A549 (cell line): ENCODE measurements at regions of chr2 and their contacts with region 1.

Region 1: DNA sequence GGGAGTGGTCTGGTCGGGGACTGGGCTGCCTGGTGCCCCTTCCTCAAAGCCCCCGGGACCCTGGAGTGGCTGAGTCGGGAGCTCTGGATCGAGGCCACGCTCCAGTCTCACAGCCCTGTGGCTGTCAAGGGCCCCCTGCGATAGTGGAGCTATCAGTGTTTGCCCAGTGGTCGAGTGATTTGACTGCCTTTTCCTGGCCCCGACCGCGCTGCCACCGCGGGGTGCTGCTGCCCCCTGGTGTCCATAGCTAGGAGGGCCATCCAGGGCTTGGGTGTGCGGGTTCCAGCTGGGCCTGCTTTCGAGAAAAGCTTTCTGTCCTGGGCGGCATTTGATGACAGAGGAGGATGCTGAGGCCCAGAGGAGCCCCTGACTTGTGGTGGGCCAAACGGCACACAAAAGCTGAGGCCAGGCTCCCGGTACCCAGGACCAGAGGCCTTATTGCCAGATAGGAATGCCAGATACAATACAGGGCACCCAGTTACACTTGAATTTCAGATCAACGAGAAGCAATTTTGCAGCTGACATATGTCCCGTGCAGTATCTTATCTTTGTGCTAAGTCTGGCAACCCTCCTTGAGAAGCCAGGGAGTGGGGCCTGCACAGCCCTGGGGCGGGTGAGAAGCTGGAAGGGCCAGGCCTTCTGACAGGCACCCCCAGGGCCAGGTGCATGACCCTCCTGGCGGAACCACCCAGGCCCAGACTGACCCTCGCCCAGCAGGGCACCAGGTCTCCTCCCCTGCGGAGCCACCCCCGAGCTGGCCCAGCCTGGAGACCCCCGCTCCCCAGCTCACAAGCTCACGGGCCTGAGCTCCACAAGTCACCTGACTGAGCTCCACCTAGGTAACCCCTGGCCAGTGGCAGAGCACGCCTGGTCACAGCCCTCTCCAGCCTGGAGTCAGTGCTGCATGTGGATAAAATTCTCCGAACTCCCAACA is 13.0 kb downstream of the ODC1 start:
- DNase-seq: peak; percentile 80 to 91
- ATAC-seq: peak; percentile 60 to 87
- H3K4me3 ChIP-seq: no peak overlapping the region
- H3K27ac ChIP-seq: peak overlapping the region in 1 of 2 experiments; percentile 68; a peak in 4 of 6 replicates
- H3K4me1 ChIP-seq: peaks cover 18% of the 10 kb centered on the region
- CTCF ChIP-seq: peak; percentile 99
- EP300 ChIP-seq: no peak
- POLR2A ChIP-seq: no peak
- RAD21 ChIP-seq: peak; percentile 100

Region 2: DNA sequence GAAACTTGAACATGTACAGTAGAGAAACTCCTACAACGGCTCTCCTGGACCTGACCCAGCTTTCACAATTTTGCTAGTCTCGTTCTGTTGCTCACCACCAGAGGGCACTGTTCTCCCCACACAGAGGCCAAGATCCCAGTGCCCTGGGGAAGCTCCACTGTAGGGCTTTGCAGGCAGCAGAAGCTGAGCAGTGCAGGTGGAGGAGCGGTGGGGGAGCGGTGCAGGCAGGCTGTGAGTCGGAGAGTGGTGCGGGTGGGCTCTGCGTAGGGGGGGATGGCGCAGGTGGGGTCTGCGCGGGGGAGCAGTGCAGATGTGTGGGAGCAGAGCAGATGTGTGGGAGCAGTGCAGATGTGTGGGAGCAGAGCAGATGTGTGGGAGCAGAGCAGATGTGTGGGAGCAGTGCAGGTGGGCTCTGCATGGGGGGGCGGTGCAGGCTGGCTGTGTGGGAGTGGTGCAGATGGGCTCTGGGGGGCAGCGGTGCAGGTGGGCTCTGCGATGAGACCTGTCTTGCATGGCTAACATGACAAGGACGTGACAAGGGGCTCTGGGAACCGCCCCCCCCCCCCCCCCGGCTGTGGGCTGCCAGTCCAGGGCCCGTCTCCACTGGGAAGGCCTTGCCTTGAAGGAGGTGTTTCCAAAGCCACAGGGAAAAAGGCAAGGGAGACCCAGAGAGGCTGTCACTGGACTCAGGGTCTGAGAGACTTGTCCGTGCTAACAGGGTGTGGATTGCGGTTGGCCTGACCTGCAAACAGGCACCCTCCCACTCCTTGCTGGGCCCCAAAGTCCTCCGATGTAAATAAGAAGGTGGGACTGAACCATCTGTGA is 362.3 kb before region 1 on chr2:
- CTCF ChIA-PET with region 1: interaction called, 311 read pairs
- POLR2A ChIA-PET with region 1: interaction called, 12 read pairs
- DNase-seq: peak; percentile 88 to 95
- ATAC-seq: peak; percentile 94 to 96
- H3K4me3 ChIP-seq: no peak overlapping the region
- H3K27ac ChIP-seq: no peak overlapping the region
- H3K4me1 ChIP-seq: peaks cover 4% of the 10 kb centered on the region; the same call in 1 of the 3 replicates
- CTCF ChIP-seq: peak; percentile 95
- EP300 ChIP-seq: no peak
- POLR2A ChIP-seq: no peak
- RAD21 ChIP-seq: peak; percentile 81 to 85

Region 3: DNA sequence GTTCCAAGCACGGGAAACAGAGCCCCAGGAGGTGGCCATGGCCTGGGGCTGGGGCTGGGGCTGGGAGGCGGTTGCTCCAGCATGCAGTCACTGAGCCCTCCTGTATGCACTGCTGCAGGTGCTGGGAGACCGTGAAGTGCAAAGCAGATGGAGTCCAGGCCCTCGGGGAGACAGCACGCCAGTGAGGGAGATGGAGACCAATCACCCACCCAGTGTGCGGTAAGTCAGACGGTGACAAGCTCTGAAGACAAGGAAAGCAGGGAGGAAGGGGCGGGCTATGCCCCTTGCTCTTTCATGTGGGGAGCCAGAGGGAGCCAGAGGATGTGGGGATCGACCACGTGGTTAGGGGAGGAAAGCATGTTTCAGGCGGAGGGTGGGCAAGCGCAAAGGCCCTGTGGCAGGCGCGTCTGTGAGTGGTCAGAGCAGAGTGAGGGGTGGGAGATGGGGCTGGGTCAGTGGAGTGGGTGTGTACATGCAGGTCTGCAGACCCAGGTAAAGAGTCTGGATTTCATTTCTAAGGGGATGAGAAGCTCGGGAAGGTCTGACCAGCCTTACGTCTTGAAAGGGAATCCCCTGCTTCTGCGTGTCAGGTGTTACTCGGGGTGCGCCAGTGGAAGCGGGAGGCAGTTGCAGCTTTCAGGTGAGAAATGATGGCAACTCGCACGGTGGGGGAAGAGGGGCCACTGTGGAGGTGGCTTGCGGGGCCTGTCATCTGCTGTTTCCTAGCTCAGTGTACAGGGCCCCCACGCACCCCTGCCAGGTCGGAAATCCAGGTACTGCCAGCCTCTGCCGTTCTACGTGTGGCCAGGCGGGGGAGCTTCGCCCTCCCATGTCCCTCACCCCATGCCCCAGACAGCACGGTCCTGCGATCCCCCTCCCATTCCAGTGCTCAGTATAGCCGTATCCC is 293.2 kb before region 1 on chr2:
- CTCF ChIA-PET with region 1: interaction called, 210 read pairs
- POLR2A ChIA-PET with region 1: no interaction called
- DNase-seq: peak in 1 of 2 experiments; percentile 58
- ATAC-seq: peak; percentile 76 to 86
- H3K4me3 ChIP-seq: no peak overlapping the region
- H3K27ac ChIP-seq: no peak overlapping the region
- H3K4me1 ChIP-seq: peaks cover 7% of the 10 kb centered on the region
- CTCF ChIP-seq: peak; percentile 68
- EP300 ChIP-seq: no peak
- POLR2A ChIP-seq: no peak
- RAD21 ChIP-seq: peak; percentile 79 to 80

Region 4: GRCh38 chr2:10302479-10303180 is 132.5 kb before region 1 on chr2 and contains the start of gene HPCAL1:
- CTCF ChIA-PET with region 1: interaction called, 15 read pairs
- POLR2A ChIA-PET with region 1: no interaction called
- DNase-seq: peak; percentile 92 to 93
- ATAC-seq: peak; percentile 79 to 91
- H3K4me3 ChIP-seq: peak within 1 kb of the TSS; percentile 84
- H3K27ac ChIP-seq: peak within 1 kb of the TSS; percentile 95 to 98
- H3K4me1 ChIP-seq: peaks cover 62% of the 10 kb centered on the region
- CTCF ChIP-seq: peak; percentile 68
- EP300 ChIP-seq: no peak
- POLR2A ChIP-seq: peak; percentile 91
- RAD21 ChIP-seq: peak; percentile 36 to 78; a peak in 4 of 5 replicates
- polyA plus RNA-seq, gene HPCAL1: 37.8 and 44.4 TPM in 2 replicates

Region 5: GRCh38 chr2:10457911-10458604 is 22.9 kb after region 1 on chr2:
- CTCF ChIA-PET with region 1: interaction called, 14 read pairs
- POLR2A ChIA-PET with region 1: no interaction called
- DNase-seq: no peak
- ATAC-seq: no peak
- H3K4me3 ChIP-seq: no peak overlapping the region
- H3K27ac ChIP-seq: peak overlapping the region in 1 of 2 experiments; percentile 15; a peak in 1 of 6 replicates
- H3K4me1 ChIP-seq: peaks cover 13% of the 10 kb centered on the region; the same call in 2 of the 3 replicates
- CTCF ChIP-seq: no peak
- EP300 ChIP-seq: no peak
- POLR2A ChIP-seq: no peak
- RAD21 ChIP-seq: no peak

Region 6: DNA sequence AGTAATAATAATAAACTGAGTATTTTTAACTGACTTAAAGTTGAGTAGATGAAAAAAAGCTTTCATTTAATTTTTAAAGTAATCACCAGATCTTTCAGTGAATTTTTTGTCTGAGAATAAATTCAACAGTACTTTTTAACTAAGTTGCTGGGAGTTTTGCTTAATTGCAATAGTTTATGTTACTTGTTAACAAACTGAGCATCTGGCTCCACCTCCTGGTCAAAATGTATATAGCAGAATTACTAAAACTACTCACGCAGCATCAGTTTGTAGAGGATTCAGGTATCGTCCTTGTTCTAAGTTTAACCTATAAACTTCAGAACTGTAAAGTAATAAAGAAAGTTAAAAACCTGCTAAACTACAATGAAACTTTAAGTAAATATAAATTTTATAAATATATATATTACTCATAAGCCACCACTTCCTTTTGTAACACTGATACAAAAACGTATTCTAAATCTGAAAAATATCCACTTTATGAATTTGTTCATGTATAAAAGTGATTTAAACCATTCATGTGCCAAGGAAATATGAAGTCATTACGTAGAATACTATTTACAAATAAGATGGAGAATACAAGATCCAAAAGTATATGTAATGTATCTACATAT is 233.4 kb after region 1 on chr2:
- CTCF ChIA-PET with region 1: interaction called, 12 read pairs
- POLR2A ChIA-PET with region 1: no interaction called
- DNase-seq: peak; percentile 15 to 72
- ATAC-seq: peak; percentile 59 to 71; a peak in 4 of 6 replicates
- H3K4me3 ChIP-seq: no peak overlapping the region
- H3K27ac ChIP-seq: no peak overlapping the region
- H3K4me1 ChIP-seq: no peaks in the 10 kb centered on the region
- CTCF ChIP-seq: peak; percentile 89
- EP300 ChIP-seq: no peak
- POLR2A ChIP-seq: no peak
- RAD21 ChIP-seq: peak; percentile 67 to 80